Ovary (tissue), 10 donors: ENCODE measurements at regions of chr19 and their contacts with region 1.

Region 1: GRCh38 chr19:10717356-10718204 is at the start of gene DNM2:
- DNase-seq: peak; percentile 97 to 99 (median 99)
- H3K4me3 ChIP-seq: peak within 1 kb of the TSS; percentile 96
- H3K27ac ChIP-seq: peak within 1 kb of the TSS; percentile 35 to 87
- H3K4me1 ChIP-seq: peaks cover 17% of the 10 kb centered on the region
- H3K27me3 ChIP-seq: no peaks in the 10 kb centered on the region
- CTCF ChIP-seq: peak; percentile 84 to 92 (median 87)
- EP300 ChIP-seq: no peak
- POLR2A ChIP-seq: peak; percentile 48
- total RNA-seq, gene DNM2: 51.1 to 121 (median 87.5) TPM

Region 2: GRCh38 chr19:10769533-10770491 is 52.2 kb after region 1 on chr19:
- intact Hi-C with region 1: loop called in 1 of 4 experiments (anchors 5 kb)
- DNase-seq: peak; percentile 58 to 73 (median 64)
- H3K4me3 ChIP-seq: no peak overlapping the region
- H3K27ac ChIP-seq: peak overlapping the region in 1 of 2 donors; percentile 49
- H3K4me1 ChIP-seq: peaks cover 15% of the 10 kb centered on the region
- H3K27me3 ChIP-seq: no peaks in the 10 kb centered on the region
- CTCF ChIP-seq: peak in 2 of 3 donors; percentile 38 to 48
- EP300 ChIP-seq: no peak
- POLR2A ChIP-seq: no peak

Region 3: GRCh38 chr19:10858204-10858828 is 140.7 kb after region 1 on chr19:
- intact Hi-C with region 1: loop called in 3 of 4 experiments (anchors 5 to 10 kb)
- DNase-seq: no peak
- H3K4me3 ChIP-seq: no peak overlapping the region
- H3K27ac ChIP-seq: no peak overlapping the region
- H3K4me1 ChIP-seq: no peaks in the 10 kb centered on the region
- H3K27me3 ChIP-seq: no peaks in the 10 kb centered on the region
- CTCF ChIP-seq: no peak
- EP300 ChIP-seq: no peak
- POLR2A ChIP-seq: no peak

Region 4: GRCh38 chr19:10870955-10871603 is 153.5 kb after region 1 on chr19 and contains the start of gene CARM1:
- intact Hi-C with region 1: loop called in 1 of 4 experiments (anchors 5 kb)
- DNase-seq: peak; percentile 99 to 100 (median 100)
- H3K4me3 ChIP-seq: peak within 1 kb of the TSS; percentile 67
- H3K27ac ChIP-seq: peak within 1 kb of the TSS; percentile 70 to 78
- H3K4me1 ChIP-seq: no peaks in the 10 kb centered on the region
- H3K27me3 ChIP-seq: no peaks in the 10 kb centered on the region
- CTCF ChIP-seq: peak; percentile 26 to 97 (median 94)
- EP300 ChIP-seq: no peak
- POLR2A ChIP-seq: no peak
- total RNA-seq, gene CARM1: 10.1 to 42.1 (median 39.8) TPM